ENCODE measurements at regions of chr18 and their contacts with region 1.

Region 1: DNA sequence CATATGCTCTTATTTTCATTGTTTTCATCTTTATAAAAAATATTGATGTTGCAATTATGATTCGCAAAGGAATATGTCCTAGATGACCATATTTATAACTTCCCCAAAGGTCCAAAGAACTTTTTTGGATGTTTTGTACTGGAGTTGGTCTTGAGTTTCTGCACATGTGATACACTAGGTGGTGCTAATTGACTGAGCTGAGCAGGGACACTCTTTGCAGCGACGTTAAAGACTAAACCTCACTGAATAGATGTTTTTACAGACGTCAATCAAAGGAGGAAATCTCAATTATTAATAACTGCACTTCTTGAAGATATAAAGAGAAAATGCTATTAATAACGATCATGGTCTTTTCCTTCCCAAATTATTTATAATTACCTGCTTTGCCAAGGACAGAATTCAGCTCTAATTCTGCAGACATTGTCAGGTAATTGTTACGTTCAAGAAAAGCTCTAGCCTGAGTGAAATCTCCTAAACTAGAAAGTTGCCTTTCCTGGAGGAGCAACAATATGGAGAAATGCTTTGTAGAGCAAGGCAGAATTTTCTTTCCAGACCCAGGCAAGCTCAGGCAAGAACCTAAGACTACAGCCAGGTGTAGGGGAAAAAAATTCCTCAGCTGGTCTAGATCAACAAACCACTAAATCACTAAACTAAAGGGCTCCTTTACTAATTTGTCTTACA is 119.3 kb upstream of the RBBP8 start:
- DNase-seq: peak; percentile 36
- CTCF ChIP-seq: peak; percentile 36

Region 2: GRCh38 chr18:21865043-21865442 is 948.7 kb before region 1 on chr18:
- in situ Hi-C with region 1: no loop called
- DNase-seq: no peak
- CTCF ChIP-seq: no peak

Region 3: GRCh38 chr18:22238036-22238435 is 575.8 kb before region 1 on chr18:
- in situ Hi-C with region 1: no loop called
- DNase-seq: no peak
- CTCF ChIP-seq: no peak

Region 4: DNA sequence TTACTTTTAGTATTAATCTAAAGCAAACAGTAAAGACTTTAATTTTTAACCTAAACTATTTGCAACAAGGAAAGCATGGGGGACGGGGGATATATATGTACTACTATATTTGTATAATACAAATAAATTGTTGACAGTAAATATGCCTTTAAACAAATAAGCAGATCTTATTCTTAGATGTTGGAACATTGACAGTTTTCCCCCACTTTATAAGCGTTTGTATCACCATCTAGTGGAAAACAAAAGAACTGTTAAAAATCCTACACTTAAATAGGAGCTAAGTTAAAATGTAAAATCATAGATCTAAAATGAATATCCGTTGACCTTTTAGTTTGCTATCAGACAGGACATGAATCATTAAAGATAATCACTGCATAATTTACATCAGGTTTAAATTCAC is 169.4 kb after region 1 on chr18:
- in situ Hi-C with region 1: loop called (anchors 25 kb)
- DNase-seq: peak; percentile 23
- CTCF ChIP-seq: no peak

Region 5: GRCh38 chr18:23183411-23184155 is 369.8 kb after region 1 on chr18:
- in situ Hi-C with region 1: no loop called
- DNase-seq: no peak
- CTCF ChIP-seq: no peak

Region 6: DNA sequence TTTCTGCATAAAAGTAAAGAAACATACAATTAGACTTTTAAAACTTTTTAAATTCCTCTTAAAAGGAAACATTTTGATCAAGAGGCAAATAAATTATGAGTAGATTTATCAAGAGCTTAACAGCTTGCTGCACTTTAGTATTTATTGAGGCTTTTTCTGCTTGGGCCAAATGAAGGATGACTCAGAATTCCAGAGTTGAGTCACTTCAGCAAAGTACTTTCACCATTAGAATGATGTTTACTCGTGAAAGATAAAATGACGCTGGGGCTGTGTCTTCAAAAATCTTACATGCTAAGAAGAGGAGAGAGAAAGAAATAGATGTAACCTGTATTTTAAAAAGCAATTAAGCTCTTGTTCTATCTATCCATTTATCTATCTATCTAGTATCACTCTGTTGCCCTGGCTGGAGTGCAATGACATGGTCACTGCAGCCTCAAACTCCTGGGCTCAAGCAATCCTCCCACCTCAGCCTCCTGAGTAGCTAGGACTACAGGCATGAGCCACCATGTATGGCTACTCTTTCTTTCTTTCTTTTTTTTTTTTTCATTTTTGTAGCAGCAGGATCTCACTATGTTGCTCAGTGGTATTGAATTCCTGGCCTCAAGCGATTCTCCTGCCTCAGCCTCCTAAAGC is 564.0 kb after region 1 on chr18:
- in situ Hi-C with region 1: loop called (anchors 25 kb)
- DNase-seq: peak; percentile 68
- CTCF ChIP-seq: no peak